ENCODE measurements at regions of chr1 and their contacts with region 1.

Region 1: GRCh38 chr1:205523891-205524793 is 19.7 kb downstream of the CDK18 start:
- DNase-seq: no peak
- H3K4me3 ChIP-seq: no peak overlapping the region
- CTCF ChIP-seq: peak; percentile 82

Region 2: DNA sequence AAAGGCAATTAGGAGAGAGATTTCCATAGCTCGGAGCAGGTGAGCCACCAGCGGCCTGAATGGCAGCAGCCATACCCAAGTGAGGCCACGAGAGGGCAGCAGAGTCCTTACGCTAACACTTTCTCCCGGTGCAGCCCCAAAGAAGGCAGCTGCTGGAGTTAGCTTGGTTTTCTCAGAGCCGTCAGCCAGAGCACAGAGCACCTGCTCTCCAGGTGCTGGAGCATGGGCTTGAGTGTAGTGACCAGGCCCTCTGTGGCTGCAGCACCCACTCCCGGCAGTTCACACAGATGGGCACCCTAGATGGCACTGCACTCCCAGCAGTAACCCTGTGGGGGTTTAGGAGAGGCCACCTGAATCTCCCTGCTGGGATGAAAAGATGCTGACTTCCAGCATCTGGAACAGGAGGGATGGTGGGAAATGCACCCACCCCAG is 250.6 kb before region 1 on chr1:
- CTCF ChIA-PET with region 1: interaction called, 29 read pairs
- POLR2A ChIA-PET with region 1: no interaction called
- DNase-seq: no peak
- H3K4me3 ChIP-seq: no peak overlapping the region
- CTCF ChIP-seq: peak; percentile 96

Region 3: DNA sequence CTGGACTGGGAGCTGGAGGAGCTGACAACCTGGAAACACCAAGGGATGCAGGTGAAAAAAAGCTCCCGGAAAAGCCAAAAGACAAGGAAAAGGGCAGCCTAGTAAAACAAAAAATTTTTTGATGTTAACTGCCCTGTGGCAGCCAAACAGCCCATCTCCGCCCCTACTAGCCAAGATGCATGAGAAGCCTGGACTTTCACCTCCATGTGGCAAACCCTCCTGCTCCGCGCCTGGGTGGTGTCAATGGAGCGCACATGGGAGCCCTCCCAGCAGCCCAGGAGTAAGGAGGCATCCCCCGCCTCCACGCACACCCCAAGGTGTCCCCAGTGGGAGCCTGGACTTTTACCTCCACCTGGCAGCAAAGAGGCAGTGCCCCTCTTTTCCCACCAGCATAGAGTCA is 132.8 kb before region 1 on chr1:
- CTCF ChIA-PET with region 1: interaction called, 102 read pairs
- POLR2A ChIA-PET with region 1: no interaction called
- DNase-seq: no peak
- H3K4me3 ChIP-seq: no peak overlapping the region
- CTCF ChIP-seq: no peak

Region 4: GRCh38 chr1:205430696-205431305 is 93.3 kb before region 1 on chr1:
- CTCF ChIA-PET with region 1: interaction called, 14 read pairs
- POLR2A ChIA-PET with region 1: no interaction called
- DNase-seq: no peak
- H3K4me3 ChIP-seq: peak overlapping the region; percentile 56
- CTCF ChIP-seq: peak; percentile 82

Region 5: GRCh38 chr1:205504311-205504984 is 19.7 kb before region 1 on chr1 and contains the start of gene CDK18:
- CTCF ChIA-PET with region 1: interaction called, 709 read pairs
- POLR2A ChIA-PET with region 1: no interaction called
- DNase-seq: no peak
- H3K4me3 ChIP-seq: peak within 1 kb of the TSS; percentile 57
- CTCF ChIP-seq: no peak